Posterior vena cava (tissue), 2 donors: ENCODE measurements at regions of chr15 and their contacts with region 1.

Region 1: GRCh38 chr15:42215913-42216829 is 8.1 kb upstream of the VPS39 start:
- DNase-seq: no peak

Region 2: GRCh38 chr15:42194502-42194901 is 21.7 kb before region 1 on chr15:
- intact Hi-C with region 1: no loop called
- DNase-seq: no peak

Region 3: GRCh38 chr15:42772144-42772543 is 556.0 kb after region 1 on chr15:
- intact Hi-C with region 1: loop called in 1 of 2 experiments (anchors 10 kb)
- DNase-seq: no peak